ENCODE measurements at regions of chr6 and their contacts with region 1.

Region 1: GRCh38 chr6:7473805-7474719 is 67.4 kb upstream of the DSP start:
- DNase-seq: no peak
- H3K4me3 ChIP-seq: no peak overlapping the region
- H3K27me3 ChIP-seq: peaks cover 3% of the 10 kb centered on the region; the same call in 1 of the 2 replicates
- CTCF ChIP-seq: no peak

Region 2: DNA sequence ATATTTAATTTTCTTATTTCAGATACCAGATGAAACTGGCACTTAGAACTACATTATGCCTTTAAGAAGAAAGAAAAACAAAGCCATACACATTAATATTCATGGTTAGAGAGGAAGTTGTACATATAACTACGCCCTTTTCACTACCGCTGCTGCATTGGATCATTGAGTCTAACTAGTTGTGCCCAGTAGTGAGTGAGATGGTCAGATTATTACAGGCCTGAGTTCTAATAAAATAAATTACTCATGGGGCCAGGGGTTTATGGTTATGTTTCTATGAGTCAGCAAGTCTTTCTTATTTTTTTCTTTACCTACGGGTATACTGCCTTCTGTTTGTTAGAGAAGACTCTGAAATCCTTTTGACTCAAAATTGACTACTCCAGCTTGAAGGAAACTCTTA is 73.0 kb before region 1 on chr6:
- CTCF ChIA-PET with region 1: no interaction called
- POLR2A ChIA-PET with region 1: no interaction called
- DNase-seq: no peak
- H3K4me3 ChIP-seq: no peak overlapping the region
- H3K27me3 ChIP-seq: no peaks in the 10 kb centered on the region
- CTCF ChIP-seq: no peak

Region 3: DNA sequence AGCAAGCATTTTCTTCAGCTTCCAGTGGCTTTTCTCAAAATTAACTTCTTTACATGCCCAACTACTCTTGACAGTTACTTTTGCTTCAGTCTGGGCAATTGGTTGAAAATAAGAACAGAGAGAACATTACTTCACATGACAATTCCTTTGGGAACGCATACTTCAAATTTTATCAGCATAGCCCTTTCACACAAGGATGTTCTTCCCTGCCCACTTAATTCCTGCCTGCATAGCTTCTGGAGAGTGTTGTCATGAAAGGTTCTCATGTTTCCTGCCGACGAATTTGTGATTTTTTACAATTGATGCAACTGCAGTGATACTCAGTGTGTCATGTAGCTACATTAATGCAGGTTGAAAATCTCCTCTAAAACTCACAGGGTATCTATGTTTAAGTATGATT is 94.0 kb after region 1 on chr6:
- CTCF ChIA-PET with region 1: no interaction called
- POLR2A ChIA-PET with region 1: interaction called, 11 read pairs
- DNase-seq: peak; percentile 80
- H3K4me3 ChIP-seq: no peak overlapping the region
- H3K27me3 ChIP-seq: no peaks in the 10 kb centered on the region
- CTCF ChIP-seq: no peak

Measured in BJ (cell line).